ENCODE measurements at regions of chr13 and their contacts with region 1.

Region 1: DNA sequence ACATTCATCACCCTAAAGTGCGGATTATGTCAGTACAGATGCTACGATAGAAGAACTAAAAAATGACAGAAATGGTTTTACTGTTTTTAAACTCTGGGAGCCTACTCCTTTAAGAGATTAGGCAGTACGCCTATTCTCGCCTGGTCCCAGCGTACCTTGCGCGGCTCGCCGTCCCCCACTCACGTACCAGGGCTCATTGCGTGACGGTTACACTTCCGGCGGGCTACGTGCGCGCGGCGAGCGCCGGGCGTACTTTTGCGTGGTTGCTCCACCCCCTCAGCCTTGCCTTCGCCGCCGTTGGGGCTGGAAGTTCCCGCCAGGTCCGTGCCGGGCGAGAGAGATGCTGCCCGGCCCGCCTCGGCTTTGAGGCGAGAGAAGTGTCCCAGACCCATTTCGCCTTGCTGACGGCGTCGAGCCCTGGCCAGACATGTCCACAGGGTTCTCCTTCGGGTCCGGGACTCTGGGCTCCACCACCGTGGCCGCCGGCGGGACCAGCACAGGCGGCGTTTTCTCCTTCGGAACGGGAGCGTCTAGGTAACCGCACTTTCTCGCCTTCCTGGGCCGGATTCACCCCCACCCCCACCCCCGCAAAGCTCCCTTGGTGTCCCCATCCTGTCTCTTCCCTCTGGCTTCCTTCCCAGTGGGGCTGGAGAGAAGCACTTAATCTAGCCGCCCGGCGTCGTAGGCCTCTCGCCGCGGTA is at the start of gene NUP58:
- DNase-seq: peak; percentile 96
- ATAC-seq: peak; percentile 98
- H3K4me3 Mint-ChIP-seq: peak within 1 kb of the TSS; percentile 96
- H3K27ac Mint-ChIP-seq: peak within 1 kb of the TSS; percentile 95
- H3K4me1 Mint-ChIP-seq: peaks cover 43% of the 10 kb centered on the region
- H3K27me3 Mint-ChIP-seq: peaks cover 12% of the 10 kb centered on the region
- total RNA-seq, gene NUP58: 85.6 to 91.0 TPM

Region 2: GRCh38 chr13:25281935-25282332 is 19.6 kb before region 1 on chr13:
- CTCF ChIA-PET with region 1: interaction called, 19 read pairs
- POLR2A ChIA-PET with region 1: interaction called, 34 read pairs
- DNase-seq: no peak
- ATAC-seq: peak; percentile 11
- H3K4me3 Mint-ChIP-seq: peak overlapping the region; percentile 1
- H3K27ac Mint-ChIP-seq: peak overlapping the region; percentile 81
- H3K4me1 Mint-ChIP-seq: peaks cover 59% of the 10 kb centered on the region
- H3K27me3 Mint-ChIP-seq: no peaks in the 10 kb centered on the region